HepG2 (cell line): ENCODE measurements at regions of chr12 and their contacts with region 1.

Region 1: GRCh38 chr12:109775172-109775881 is 57.9 kb downstream of the TRPV4 start:
- DNase-seq: peak; percentile 50
- ATAC-seq: peak; percentile 73
- H3K4me3 ChIP-seq: no peak overlapping the region
- H3K27ac ChIP-seq: no peak overlapping the region
- H3K4me1 ChIP-seq: peaks cover 52% of the 10 kb centered on the region
- H3K27me3 ChIP-seq: no peaks in the 10 kb centered on the region
- CTCF ChIP-seq: peak; percentile 95
- EP300 ChIP-seq: no peak
- POLR2A ChIP-seq: no peak
- RAD21 ChIP-seq: peak; percentile 94

Region 2: DNA sequence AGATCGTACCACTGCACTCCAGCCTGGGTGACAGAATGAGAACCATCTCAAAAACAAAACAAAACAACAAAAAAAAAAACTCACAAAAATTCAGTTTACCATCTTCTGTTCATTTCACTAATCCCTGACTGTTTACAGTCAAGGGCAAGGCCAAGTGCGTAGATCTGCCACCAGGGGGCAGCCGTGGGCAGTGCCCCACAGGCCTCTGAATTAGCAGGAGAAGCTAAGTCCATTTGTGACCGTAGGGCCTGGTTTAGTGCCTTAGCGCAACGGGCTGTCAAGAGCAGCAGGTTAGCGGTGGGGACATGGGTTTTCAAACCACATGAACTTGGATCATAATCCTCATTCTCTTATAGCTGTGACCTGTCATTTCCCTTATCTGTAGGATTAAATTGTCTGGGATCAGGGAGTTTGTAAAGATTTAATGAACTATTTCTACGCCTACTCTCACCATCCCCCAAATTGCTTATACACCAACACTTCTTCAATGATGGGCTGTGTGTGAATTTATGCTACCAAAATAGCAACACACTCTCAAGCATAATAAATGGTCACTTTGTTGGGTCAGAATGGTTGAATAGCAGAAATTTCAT is 347.2 kb before region 1 on chr12:
- CTCF ChIA-PET with region 1: no interaction called
- POLR2A ChIA-PET with region 1: no interaction called
- in situ Hi-C with region 1: loop called (anchors 5 kb)
- intact Hi-C with region 1: loop called (anchors 1 kb)
- DNase-seq: peak; percentile 62
- ATAC-seq: peak; percentile 84
- H3K4me3 ChIP-seq: no peak overlapping the region
- H3K27ac ChIP-seq: no peak overlapping the region
- H3K4me1 ChIP-seq: peaks cover 15% of the 10 kb centered on the region
- H3K27me3 ChIP-seq: no peaks in the 10 kb centered on the region; a peak in 1 of 5 replicates
- CTCF ChIP-seq: peak; percentile 90
- EP300 ChIP-seq: no peak
- POLR2A ChIP-seq: no peak
- RAD21 ChIP-seq: peak; percentile 61

Region 3: DNA sequence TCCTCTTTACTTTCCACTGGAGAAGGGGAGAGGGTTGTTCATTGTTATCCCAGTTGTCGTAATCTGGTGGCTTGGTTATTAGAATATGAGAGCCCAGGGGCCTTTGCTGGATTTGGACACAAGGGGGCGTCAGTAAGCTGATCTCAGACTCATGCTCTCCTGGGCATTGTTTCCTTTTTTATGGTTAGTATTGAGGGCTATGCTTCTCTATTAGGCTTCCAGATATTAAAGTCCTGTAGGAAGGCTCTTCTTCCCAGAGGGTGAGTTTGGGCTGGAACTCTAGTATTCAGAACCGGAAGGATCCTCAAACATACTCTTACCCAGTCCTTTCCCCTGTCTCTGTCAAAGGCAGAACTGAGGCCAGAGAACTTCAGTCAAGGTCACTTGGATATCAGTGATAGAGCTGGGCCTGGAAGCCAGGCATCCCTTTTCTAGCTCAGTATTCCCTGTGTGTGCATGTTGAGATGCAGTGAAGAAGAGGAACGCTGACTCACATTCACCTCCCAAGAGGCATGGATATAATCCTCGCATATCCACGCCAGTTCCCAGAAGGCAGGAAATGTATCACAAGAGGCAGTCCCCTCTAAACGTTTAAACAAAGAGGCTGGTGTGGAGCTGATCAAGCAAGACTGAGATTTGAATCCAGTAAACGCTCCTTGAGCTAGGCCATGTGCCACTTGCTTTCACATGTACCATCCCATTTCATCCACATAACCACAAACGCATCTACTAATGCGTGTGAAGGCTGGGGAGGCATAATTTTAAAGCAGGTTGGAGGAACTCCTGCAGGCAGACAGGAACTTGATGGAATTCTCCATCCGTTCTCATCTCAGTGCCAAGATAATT is 256.3 kb before region 1 on chr12:
- CTCF ChIA-PET with region 1: interaction called, 29 read pairs
- POLR2A ChIA-PET with region 1: no interaction called
- in situ Hi-C with region 1: loop called (anchors 5 kb)
- intact Hi-C with region 1: loop called (anchors 1 kb)
- DNase-seq: peak; percentile 43
- ATAC-seq: peak; percentile 85
- H3K4me3 ChIP-seq: no peak overlapping the region
- H3K27ac ChIP-seq: no peak overlapping the region
- H3K4me1 ChIP-seq: peaks cover 6% of the 10 kb centered on the region
- H3K27me3 ChIP-seq: no peaks in the 10 kb centered on the region
- CTCF ChIP-seq: peak; percentile 86
- EP300 ChIP-seq: no peak
- POLR2A ChIP-seq: no peak
- RAD21 ChIP-seq: peak; percentile 58

Region 4: GRCh38 chr12:109597795-109598427 is 177.4 kb before region 1 on chr12:
- CTCF ChIA-PET with region 1: interaction called, 31 read pairs
- POLR2A ChIA-PET with region 1: interaction called, 26 read pairs
- in situ Hi-C with region 1: loop called (anchors 5 kb)
- intact Hi-C with region 1: loop called (anchors 1 kb)
- DNase-seq: peak; percentile 75
- ATAC-seq: peak; percentile 87
- H3K4me3 ChIP-seq: peak overlapping the region; percentile 44 to 71 (median 46)
- H3K27ac ChIP-seq: peak overlapping the region; percentile 63
- H3K4me1 ChIP-seq: peaks cover 36% of the 10 kb centered on the region
- H3K27me3 ChIP-seq: no peaks in the 10 kb centered on the region; a peak in 1 of 5 replicates
- CTCF ChIP-seq: peak; percentile 97
- EP300 ChIP-seq: no peak
- POLR2A ChIP-seq: peak; percentile 42 to 65; a peak in 3 of 4 replicates
- RAD21 ChIP-seq: peak; percentile 97

Region 5: DNA sequence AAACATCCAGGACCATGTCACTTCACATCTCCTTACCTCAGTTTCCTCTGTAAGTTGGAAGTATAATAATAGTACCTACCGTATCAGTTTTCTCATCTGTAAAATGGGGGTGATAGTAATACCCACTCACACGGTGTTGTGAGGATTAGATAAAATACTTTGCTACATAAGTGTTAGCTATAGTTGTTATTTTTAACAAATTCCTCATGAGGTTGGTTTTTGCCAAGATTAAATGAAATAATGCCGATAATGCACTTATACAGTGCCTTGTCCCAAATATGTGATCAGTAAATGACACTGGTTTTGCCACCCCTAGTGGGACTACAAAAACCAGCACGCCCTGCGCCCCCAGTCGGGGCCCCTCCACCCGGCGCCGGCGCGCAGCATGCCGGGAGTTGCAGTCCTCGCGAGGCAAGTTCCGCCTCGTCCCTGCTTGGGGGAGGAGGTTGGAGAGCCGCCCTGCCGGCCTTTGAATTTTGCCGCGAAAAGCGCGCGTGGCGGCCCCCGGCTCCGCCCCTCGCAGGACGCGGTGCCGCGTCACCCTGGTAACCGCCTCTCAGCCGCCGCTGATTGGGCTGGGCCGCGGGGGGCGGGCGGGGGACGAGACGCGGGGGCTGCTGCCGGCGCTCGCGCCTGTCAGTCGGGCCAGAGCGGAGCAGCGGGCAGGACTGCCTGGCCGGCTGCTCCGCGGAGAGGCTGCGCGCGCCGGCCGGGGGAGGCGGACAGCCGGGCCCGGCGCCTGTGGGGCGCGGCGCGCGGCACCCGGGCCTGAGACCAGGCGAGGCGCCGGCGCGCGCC is 61.9 kb before region 1 on chr12 and contains the start of gene FAM222A:
- CTCF ChIA-PET with region 1: no interaction called
- POLR2A ChIA-PET with region 1: interaction called, 8 read pairs
- in situ Hi-C with region 1: loop called (anchors 5 kb)
- intact Hi-C with region 1: loop called (anchors 2 kb)
- DNase-seq: peak; percentile 94
- ATAC-seq: peak; percentile 62
- H3K4me3 ChIP-seq: peak within 1 kb of the TSS; percentile 72 to 82 (median 74)
- H3K27ac ChIP-seq: peak within 1 kb of the TSS; percentile 65
- H3K4me1 ChIP-seq: peaks cover 82% of the 10 kb centered on the region
- H3K27me3 ChIP-seq: no peaks in the 10 kb centered on the region
- CTCF ChIP-seq: no peak
- EP300 ChIP-seq: no peak
- POLR2A ChIP-seq: peak in 1 of 2 experiments; percentile 76; a peak in 2 of 4 replicates
- RAD21 ChIP-seq: no peak
- total RNA-seq, gene FAM222A: 7.2 and 9.6 TPM in 2 replicates

Region 6: DNA sequence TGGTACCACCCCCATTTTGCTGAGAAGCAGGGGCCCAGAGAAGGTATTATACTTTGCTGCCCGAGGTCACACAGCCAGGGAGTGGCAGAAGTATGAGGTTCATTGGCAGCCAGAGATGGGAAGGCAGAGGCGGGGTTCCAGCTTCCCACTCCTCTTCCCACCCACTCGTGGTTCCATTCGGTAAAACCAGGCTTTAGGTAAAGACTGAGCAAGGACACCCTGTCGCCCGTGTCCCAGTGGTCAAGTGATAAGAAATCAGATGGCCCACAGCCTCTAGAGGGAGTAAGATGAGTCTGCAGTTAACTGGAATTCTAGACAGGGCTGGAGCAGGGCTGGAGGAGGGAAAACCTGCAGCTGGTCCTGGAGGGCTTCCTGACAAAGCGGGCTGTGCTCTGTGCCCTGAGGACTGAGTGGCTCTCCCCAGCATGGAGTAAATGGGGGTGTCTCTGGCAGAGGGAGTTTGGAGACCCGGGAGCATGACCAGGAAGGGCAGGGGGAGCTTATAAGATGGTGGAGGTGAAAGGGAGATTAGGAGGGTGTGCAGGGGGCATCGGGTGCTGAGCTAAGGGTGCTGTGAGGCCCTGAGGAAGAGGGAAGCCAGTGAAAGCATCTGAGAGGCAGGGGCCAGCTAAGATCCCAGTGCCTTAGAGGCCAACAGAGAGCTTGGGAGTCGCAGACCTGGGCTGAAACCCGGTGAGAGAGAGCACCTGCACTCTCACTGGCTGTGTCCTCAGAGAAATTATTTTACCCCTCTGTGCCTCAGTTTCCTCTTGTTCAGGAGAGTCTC is 55.9 kb before region 1 on chr12:
- CTCF ChIA-PET with region 1: no interaction called
- POLR2A ChIA-PET with region 1: interaction called, 8 read pairs
- in situ Hi-C with region 1: loop called (anchors 5 kb)
- intact Hi-C with region 1: loop called (anchors 2 kb)
- DNase-seq: peak; percentile 66
- ATAC-seq: peak; percentile 50
- H3K4me3 ChIP-seq: no peak overlapping the region
- H3K27ac ChIP-seq: no peak overlapping the region
- H3K4me1 ChIP-seq: peaks cover 79% of the 10 kb centered on the region
- H3K27me3 ChIP-seq: no peaks in the 10 kb centered on the region
- CTCF ChIP-seq: peak; percentile 74
- EP300 ChIP-seq: no peak
- POLR2A ChIP-seq: no peak
- RAD21 ChIP-seq: peak; percentile 60